ENCODE measurements at regions of chr21 and their contacts with region 1.

Region 1: DNA sequence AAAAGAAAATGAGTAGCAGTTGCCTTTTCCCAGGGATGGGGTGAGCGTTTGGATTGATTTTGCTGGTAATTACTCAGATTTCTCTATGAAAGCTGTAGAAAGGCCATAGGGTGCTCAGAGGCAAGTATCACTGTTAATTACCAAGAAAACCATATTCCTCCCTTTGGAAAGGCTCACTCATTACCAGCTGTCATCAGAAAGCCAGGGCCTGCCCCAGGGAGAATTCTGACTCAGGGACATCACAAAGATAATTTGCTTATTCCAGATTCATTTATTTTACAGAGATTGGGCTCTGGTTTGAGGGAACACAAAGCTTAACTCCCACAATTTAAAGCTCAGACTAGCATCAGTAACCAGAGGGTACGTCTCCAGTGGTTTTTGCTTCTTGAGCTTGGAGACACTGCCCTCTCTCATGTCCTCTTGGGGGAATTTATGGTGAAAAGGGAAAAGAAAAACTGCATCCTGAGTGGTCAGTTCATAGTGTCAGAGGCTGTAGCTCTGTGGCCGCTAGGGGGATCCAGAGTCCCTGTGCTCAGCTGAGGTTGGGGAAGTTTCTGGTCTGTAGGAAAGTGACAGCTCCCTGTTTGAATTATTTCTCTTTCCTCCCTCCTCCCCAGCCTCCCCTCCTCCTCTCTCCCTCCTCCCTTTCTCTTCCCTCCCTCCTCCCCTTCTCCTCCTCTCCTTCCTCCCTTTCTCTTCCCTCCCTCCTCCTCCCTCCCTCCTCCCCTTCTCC is 204.3 kb downstream of the KCNJ6 start:
- DNase-seq: peak; percentile 68
- H3K4me3 ChIP-seq: no peak overlapping the region
- H3K27ac ChIP-seq: no peak overlapping the region
- H3K4me1 ChIP-seq: no peaks in the 10 kb centered on the region
- CTCF ChIP-seq: peak; percentile 84

Region 2: DNA sequence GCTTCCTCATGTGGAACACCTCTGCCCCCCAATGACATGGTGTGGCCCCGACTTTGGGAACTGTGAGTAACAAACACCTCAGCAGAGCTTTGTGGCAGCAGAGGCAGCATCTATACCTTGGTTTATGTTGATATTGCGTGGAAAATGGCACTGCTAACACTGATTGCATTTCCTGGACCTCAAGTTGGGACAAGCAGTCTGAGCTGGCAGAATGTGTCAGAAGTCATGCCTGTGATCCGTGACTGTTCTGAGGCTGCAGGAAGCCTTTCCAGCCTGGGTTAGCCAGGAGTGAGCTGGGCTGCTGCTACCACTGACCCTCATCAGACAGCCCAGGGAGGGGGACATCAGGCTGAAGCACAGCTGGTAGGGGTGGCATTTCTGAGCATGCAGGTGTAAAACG is 64.2 kb before region 1 on chr21:
- CTCF ChIA-PET with region 1: no interaction called
- POLR2A ChIA-PET with region 1: no interaction called
- intact Hi-C with region 1: no loop called
- DNase-seq: no peak
- H3K4me3 ChIP-seq: no peak overlapping the region
- H3K27ac ChIP-seq: no peak overlapping the region
- H3K4me1 ChIP-seq: no peaks in the 10 kb centered on the region
- CTCF ChIP-seq: no peak

Region 3: GRCh38 chr21:37771181-37771580 is 59.2 kb after region 1 on chr21:
- CTCF ChIA-PET with region 1: no interaction called
- POLR2A ChIA-PET with region 1: no interaction called
- intact Hi-C with region 1: no loop called
- DNase-seq: no peak
- H3K4me3 ChIP-seq: no peak overlapping the region
- H3K27ac ChIP-seq: no peak overlapping the region
- H3K4me1 ChIP-seq: no peaks in the 10 kb centered on the region
- CTCF ChIP-seq: no peak

Region 4: DNA sequence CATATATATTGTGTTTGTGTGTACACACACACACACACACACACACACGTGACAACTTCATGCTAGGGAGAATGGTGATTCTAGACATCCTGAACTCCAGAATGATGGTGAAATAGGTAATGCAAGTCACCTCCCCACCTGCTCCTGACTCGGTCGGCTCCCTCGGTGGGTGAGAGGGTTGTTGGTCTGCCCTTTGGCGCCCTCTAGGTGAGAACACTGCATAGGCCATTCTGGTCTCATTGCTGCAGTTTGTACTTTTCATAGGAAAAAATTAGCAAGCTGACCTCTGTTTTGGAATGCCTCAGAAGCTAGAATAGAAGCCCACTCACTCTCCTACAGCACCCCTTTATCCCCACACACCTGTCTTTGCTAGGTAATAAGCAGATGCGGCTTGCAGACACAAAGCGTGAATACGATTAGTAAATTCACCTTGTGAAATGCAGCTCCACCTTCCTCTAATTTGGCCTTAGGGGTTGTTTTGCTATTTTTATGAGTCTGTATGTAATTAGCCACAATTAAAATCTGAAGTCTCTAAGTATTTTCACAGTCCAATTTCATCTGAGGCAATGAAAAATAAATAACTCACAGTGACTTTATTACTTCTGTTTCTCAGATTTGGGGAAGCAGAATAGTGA is 414.8 kb after region 1 on chr21:
- CTCF ChIA-PET with region 1: interaction called, 4 read pairs
- POLR2A ChIA-PET with region 1: no interaction called
- intact Hi-C with region 1: loop called (anchors 2 kb)
- DNase-seq: peak; percentile 60
- H3K4me3 ChIP-seq: no peak overlapping the region
- H3K27ac ChIP-seq: no peak overlapping the region
- H3K4me1 ChIP-seq: no peaks in the 10 kb centered on the region
- CTCF ChIP-seq: peak; percentile 88

Measured in OCI-LY7 (cell line).